Activated CD4-positive, alpha-beta memory T cell treated with anti-CD3 and anti-CD28 coated beads, Interleukin-2, amount 10 ng/mL, durations not matched to agents 7 days and 5 days (primary cell): ENCODE measurements at regions of chr20 and their contacts with region 1.

Region 1: GRCh38 chr20:43749734-43750294 is 23.0 kb upstream of the GTSF1L start:
- DNase-seq: peak; percentile 81
- H3K4me3 Mint-ChIP-seq: no peak overlapping the region
- H3K27ac Mint-ChIP-seq: peak overlapping the region; percentile 41
- H3K4me1 Mint-ChIP-seq: peaks cover 46% of the 10 kb centered on the region
- H3K27me3 Mint-ChIP-seq: peaks cover 14% of the 10 kb centered on the region

Region 2: DNA sequence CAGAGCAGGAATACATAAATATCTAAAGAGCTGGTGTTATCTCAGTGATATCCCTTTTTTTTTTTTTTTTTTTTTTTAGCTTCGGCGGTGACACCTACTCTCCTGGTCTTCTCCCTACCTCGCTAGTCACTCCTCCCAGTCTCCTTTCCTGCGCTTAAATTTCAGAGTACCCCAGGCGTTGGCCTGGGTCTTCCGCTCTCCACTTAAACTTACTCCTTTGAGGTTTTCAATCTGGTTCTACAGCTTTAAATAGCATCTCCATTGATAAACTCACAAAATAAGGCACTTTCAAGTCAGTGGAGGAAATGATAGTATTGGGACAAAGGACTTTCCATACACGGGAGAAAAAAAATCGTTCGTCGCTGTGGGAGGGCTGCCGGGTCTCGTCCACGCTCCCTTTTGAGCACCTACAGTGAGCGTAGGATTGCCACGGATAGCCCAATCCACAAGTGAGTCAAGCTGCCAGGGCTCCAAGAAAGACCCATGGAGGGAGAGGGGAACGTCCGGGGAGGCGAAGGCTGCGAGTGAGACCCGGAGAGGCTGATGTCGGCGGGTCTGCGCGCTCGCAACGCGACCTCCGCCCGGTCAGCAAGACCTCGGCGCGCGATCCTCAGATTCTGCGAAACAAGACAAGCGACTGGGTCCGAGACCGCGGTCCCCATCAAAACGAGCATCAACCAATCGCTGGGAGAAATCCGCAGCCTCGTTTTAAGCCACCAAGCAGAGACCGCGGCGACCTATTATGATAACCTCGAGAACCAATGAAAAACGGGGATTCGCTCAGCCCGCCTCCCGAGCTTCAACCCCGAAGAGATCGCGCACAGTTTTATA is 292.8 kb before region 1 on chr20:
- CTCF ChIA-PET with region 1: interaction called, 3 read pairs
- POLR2A ChIA-PET with region 1: interaction called, 10 read pairs
- DNase-seq: peak; percentile 91
- H3K4me3 Mint-ChIP-seq: peak overlapping the region; percentile 86
- H3K27ac Mint-ChIP-seq: peak overlapping the region; percentile 93
- H3K4me1 Mint-ChIP-seq: peaks cover 33% of the 10 kb centered on the region
- H3K27me3 Mint-ChIP-seq: peaks cover 4% of the 10 kb centered on the region

Region 3: GRCh38 chr20:43942661-43943290 is 193.0 kb after region 1 on chr20:
- CTCF ChIA-PET with region 1: interaction called, 13 read pairs
- POLR2A ChIA-PET with region 1: interaction called, 13 read pairs
- DNase-seq: peak; percentile 28
- H3K4me3 Mint-ChIP-seq: peak overlapping the region; percentile 34
- H3K27ac Mint-ChIP-seq: peak overlapping the region; percentile 85
- H3K4me1 Mint-ChIP-seq: peaks cover 63% of the 10 kb centered on the region
- H3K27me3 Mint-ChIP-seq: peaks cover 55% of the 10 kb centered on the region

Region 4: GRCh38 chr20:43955062-43955749 is 205.4 kb after region 1 on chr20:
- CTCF ChIA-PET with region 1: interaction called, 3 read pairs
- POLR2A ChIA-PET with region 1: interaction called, 13 read pairs
- DNase-seq: peak; percentile 57
- H3K4me3 Mint-ChIP-seq: peak overlapping the region; percentile 2
- H3K27ac Mint-ChIP-seq: peak overlapping the region; percentile 66
- H3K4me1 Mint-ChIP-seq: peaks cover 79% of the 10 kb centered on the region
- H3K27me3 Mint-ChIP-seq: peaks cover 59% of the 10 kb centered on the region

Region 5: DNA sequence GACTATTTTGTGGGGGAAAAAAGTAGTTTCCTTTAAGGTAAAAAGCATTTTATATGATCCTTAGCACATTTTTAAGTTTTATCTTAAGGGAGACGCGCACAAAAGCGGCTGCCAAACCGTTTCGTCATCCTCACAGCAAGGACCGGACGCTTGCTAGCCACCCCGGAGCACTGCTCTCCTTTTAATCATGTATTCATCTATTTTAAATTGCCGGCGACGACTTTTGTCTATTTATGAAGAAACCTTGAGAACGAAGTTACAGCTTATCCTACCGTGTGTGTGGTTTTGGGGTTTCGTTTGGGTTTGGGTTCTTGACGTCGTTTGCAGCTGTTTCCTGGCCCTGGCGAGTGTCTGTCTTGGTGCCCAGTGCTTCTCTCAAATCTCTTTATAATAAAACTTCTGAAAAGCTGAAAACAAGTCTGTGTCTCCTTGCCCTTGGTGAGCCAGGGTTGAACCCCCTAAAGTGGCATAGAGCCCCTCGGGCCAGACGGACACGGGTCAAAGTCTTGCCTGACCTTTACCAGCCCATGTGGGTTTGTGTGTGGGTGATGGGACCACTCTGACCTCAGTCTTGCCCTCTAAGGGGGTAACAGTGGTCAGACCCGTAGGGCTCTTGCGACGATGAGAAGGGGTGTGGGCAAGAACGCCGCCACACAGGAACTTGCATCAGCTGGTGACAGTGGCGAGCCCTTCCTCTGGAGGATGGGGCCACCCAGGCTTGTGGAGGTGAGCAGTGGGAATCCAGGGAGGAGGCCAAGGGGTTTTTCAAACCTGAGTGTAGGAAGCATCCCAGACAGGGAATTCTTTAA is 319.6 kb after region 1 on chr20:
- CTCF ChIA-PET with region 1: interaction called, 9 read pairs
- POLR2A ChIA-PET with region 1: interaction called, 16 read pairs
- DNase-seq: peak; percentile 79
- H3K4me3 Mint-ChIP-seq: peak overlapping the region; percentile 61
- H3K27ac Mint-ChIP-seq: peak overlapping the region; percentile 90
- H3K4me1 Mint-ChIP-seq: peaks cover 44% of the 10 kb centered on the region
- H3K27me3 Mint-ChIP-seq: peaks cover 45% of the 10 kb centered on the region

Region 6: GRCh38 chr20:44092551-44093248 is 342.9 kb after region 1 on chr20:
- CTCF ChIA-PET with region 1: interaction called, 13 read pairs
- POLR2A ChIA-PET with region 1: no interaction called
- DNase-seq: peak; percentile 37
- H3K4me3 Mint-ChIP-seq: no peak overlapping the region
- H3K27ac Mint-ChIP-seq: no peak overlapping the region
- H3K4me1 Mint-ChIP-seq: no peaks in the 10 kb centered on the region
- H3K27me3 Mint-ChIP-seq: peaks cover 25% of the 10 kb centered on the region